ENCODE measurements at regions of chr2 and their contacts with region 1.

Region 1: DNA sequence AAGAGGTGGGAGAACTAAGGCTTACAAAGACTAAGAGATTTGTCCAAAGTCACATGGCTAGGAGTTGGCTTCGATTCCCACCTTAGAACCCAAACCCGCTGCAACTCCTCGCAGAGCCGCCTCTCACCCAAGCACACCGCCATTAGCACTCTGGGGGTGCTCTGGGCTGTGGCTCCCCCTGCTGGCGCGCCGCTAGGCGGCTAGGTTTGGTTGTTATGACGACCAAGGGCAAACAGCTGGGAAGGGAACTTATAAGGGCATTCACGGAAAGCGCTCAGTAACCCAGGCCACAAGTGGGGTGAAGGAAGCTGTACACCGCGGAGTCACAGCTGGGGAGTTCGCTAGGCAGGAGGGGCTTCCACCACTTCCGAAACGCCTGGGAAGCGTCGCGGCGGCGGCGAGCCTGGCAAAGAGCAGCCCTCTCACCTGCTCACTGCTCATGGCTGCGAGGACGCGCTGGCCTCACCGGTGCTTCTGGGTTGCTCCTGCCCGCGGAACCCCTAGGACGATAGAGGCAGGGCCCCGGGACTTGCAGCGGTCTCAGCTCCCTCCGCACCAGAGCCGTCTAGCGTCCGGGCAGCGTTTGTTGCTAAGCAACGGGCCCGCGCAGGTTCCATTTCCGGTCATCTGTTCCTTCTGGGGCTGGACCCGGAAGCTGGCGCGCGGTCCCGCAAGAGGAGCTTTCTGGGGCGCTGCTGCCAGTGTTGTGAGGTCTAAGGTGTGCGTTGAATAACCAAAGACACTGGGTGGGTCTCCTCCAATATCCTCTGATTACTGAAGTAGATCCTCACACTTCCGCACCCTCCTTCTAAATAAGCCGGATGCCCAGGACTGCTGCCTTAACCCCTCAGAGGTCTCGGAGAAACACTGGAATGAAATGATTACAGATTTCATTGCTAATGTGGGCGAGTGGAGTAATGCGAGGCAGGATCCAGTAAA is at the start of gene DNAH7:
- DNase-seq: peak; percentile 92 to 96 (median 92)
- H3K4me3 ChIP-seq: peak within 1 kb of the TSS; percentile 54 to 68
- H3K4me3 Mint-ChIP-seq: peak within 1 kb of the TSS; percentile 84 to 91 (median 86)
- H3K27ac ChIP-seq: peak within 1 kb of the TSS; percentile 27
- H3K27ac Mint-ChIP-seq: peak within 1 kb of the TSS; percentile 81 to 95 (median 86)
- H3K4me1 ChIP-seq: peaks cover 18% of the 10 kb centered on the region
- H3K4me1 Mint-ChIP-seq: peaks cover 5 to 15% (median 8%) of the 10 kb centered on the region in 4 donors
- H3K27me3 ChIP-seq: no peaks in the 10 kb centered on the region
- H3K27me3 Mint-ChIP-seq: peaks cover 1 to 7% of the 10 kb centered on the region in 2 donors
- total RNA-seq, gene DNAH7: not detected

Region 2: GRCh38 chr2:195318440-195319111 is 750.0 kb before region 1 on chr2:
- CTCF ChIA-PET with region 1: no interaction called
- POLR2A ChIA-PET with region 1: no interaction called
- intact Hi-C with region 1: loop called (anchors 5 kb)
- DNase-seq: peak; percentile 33 to 48 (median 44)
- H3K4me3 ChIP-seq: no peak overlapping the region
- H3K4me3 Mint-ChIP-seq: no peak overlapping the region
- H3K27ac ChIP-seq: no peak overlapping the region
- H3K27ac Mint-ChIP-seq: no peak overlapping the region
- H3K4me1 ChIP-seq: peaks cover 11% of the 10 kb centered on the region
- H3K4me1 Mint-ChIP-seq: peaks cover 5 to 11% (median 8%) of the 10 kb centered on the region in 4 donors
- H3K27me3 ChIP-seq: no peaks in the 10 kb centered on the region
- H3K27me3 Mint-ChIP-seq: no peaks in the 10 kb centered on the region

Region 3: GRCh38 chr2:195575879-195576401 is 492.6 kb before region 1 on chr2:
- CTCF ChIA-PET with region 1: interaction called, 5 read pairs
- POLR2A ChIA-PET with region 1: no interaction called
- intact Hi-C with region 1: loop called (anchors 2 kb)
- DNase-seq: no peak
- H3K4me3 ChIP-seq: no peak overlapping the region
- H3K4me3 Mint-ChIP-seq: peak overlapping the region in 7 of 8 donors; percentile 25 to 70 (median 57)
- H3K27ac ChIP-seq: no peak overlapping the region
- H3K27ac Mint-ChIP-seq: peak overlapping the region in 6 of 7 donors; percentile 36 to 93 (median 90)
- H3K4me1 ChIP-seq: peaks cover 47% of the 10 kb centered on the region
- H3K4me1 Mint-ChIP-seq: peaks cover 35 to 64% (median 52%) of the 10 kb centered on the region in 4 donors
- H3K27me3 ChIP-seq: no peaks in the 10 kb centered on the region
- H3K27me3 Mint-ChIP-seq: no peaks in the 10 kb centered on the region

Region 4: GRCh38 chr2:195838002-195838401 is 230.5 kb before region 1 on chr2:
- CTCF ChIA-PET with region 1: no interaction called
- POLR2A ChIA-PET with region 1: no interaction called
- intact Hi-C with region 1: no loop called
- DNase-seq: no peak
- H3K4me3 ChIP-seq: no peak overlapping the region
- H3K4me3 Mint-ChIP-seq: no peak overlapping the region
- H3K27ac ChIP-seq: no peak overlapping the region
- H3K27ac Mint-ChIP-seq: no peak overlapping the region
- H3K4me1 ChIP-seq: peaks cover 9% of the 10 kb centered on the region
- H3K4me1 Mint-ChIP-seq: peaks cover 5 to 15% (median 9%) of the 10 kb centered on the region in 4 donors
- H3K27me3 ChIP-seq: no peaks in the 10 kb centered on the region
- H3K27me3 Mint-ChIP-seq: peaks cover 1 to 2% of the 10 kb centered on the region in 2 donors

Region 5: DNA sequence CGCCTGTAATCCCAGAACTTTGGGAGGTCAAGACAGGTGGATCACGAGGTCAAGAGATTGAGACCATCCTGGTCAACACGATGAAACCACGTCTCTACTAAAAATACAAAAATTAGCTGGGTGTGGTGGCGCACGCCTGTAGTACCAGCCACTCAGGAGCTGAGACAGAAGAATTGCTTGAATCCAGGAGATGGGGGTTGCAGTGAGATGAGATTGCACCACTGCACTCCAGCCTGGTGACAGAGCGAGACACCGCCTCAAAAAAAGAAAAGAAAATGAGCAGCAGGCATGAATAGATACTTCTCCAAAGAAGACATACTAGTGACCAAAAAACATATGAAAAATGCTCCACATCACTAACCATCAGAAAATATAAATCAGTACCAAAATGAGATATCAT is 138.5 kb before region 1 on chr2:
- CTCF ChIA-PET with region 1: no interaction called
- POLR2A ChIA-PET with region 1: no interaction called
- intact Hi-C with region 1: no loop called
- DNase-seq: no peak
- H3K4me3 ChIP-seq: no peak overlapping the region
- H3K4me3 Mint-ChIP-seq: no peak overlapping the region
- H3K27ac ChIP-seq: no peak overlapping the region
- H3K27ac Mint-ChIP-seq: no peak overlapping the region
- H3K4me1 ChIP-seq: no peaks in the 10 kb centered on the region
- H3K4me1 Mint-ChIP-seq: no peaks in the 10 kb centered on the region
- H3K27me3 ChIP-seq: no peaks in the 10 kb centered on the region
- H3K27me3 Mint-ChIP-seq: peaks cover 0 to 3% of the 10 kb centered on the region in 2 donors

Region 6: GRCh38 chr2:195961873-195962272 is 106.7 kb before region 1 on chr2:
- CTCF ChIA-PET with region 1: no interaction called
- POLR2A ChIA-PET with region 1: no interaction called
- intact Hi-C with region 1: no loop called
- DNase-seq: no peak
- H3K4me3 ChIP-seq: no peak overlapping the region
- H3K4me3 Mint-ChIP-seq: no peak overlapping the region
- H3K27ac ChIP-seq: no peak overlapping the region
- H3K27ac Mint-ChIP-seq: no peak overlapping the region
- H3K4me1 ChIP-seq: no peaks in the 10 kb centered on the region
- H3K4me1 Mint-ChIP-seq: no peaks in the 10 kb centered on the region
- H3K27me3 ChIP-seq: no peaks in the 10 kb centered on the region
- H3K27me3 Mint-ChIP-seq: peaks cover 7 to 10% of the 10 kb centered on the region in 2 donors

Region 7: GRCh38 chr2:195995499-195995898 is 73.0 kb before region 1 on chr2:
- CTCF ChIA-PET with region 1: no interaction called
- POLR2A ChIA-PET with region 1: no interaction called
- intact Hi-C with region 1: no loop called
- DNase-seq: no peak
- H3K4me3 ChIP-seq: no peak overlapping the region
- H3K4me3 Mint-ChIP-seq: no peak overlapping the region
- H3K27ac ChIP-seq: no peak overlapping the region
- H3K27ac Mint-ChIP-seq: no peak overlapping the region
- H3K4me1 ChIP-seq: no peaks in the 10 kb centered on the region
- H3K4me1 Mint-ChIP-seq: peaks cover 0 to 1% (median 0%) of the 10 kb centered on the region in 4 donors
- H3K27me3 ChIP-seq: no peaks in the 10 kb centered on the region
- H3K27me3 Mint-ChIP-seq: peaks cover 0 to 6% of the 10 kb centered on the region in 2 donors

Region 8: GRCh38 chr2:196225213-196225612 is 156.7 kb after region 1 on chr2:
- CTCF ChIA-PET with region 1: interaction called, 129 read pairs
- POLR2A ChIA-PET with region 1: no interaction called
- intact Hi-C with region 1: no loop called
- DNase-seq: no peak
- H3K4me3 ChIP-seq: no peak overlapping the region
- H3K4me3 Mint-ChIP-seq: peak overlapping the region in 3 of 8 donors; percentile 33 to 57 (median 41)
- H3K27ac ChIP-seq: no peak overlapping the region
- H3K27ac Mint-ChIP-seq: peak overlapping the region in 5 of 7 donors; percentile 1 to 68 (median 54)
- H3K4me1 ChIP-seq: peaks cover 79% of the 10 kb centered on the region
- H3K4me1 Mint-ChIP-seq: peaks cover 51 to 85% (median 69%) of the 10 kb centered on the region in 4 donors
- H3K27me3 ChIP-seq: no peaks in the 10 kb centered on the region
- H3K27me3 Mint-ChIP-seq: no peaks in the 10 kb centered on the region

Region 9: DNA sequence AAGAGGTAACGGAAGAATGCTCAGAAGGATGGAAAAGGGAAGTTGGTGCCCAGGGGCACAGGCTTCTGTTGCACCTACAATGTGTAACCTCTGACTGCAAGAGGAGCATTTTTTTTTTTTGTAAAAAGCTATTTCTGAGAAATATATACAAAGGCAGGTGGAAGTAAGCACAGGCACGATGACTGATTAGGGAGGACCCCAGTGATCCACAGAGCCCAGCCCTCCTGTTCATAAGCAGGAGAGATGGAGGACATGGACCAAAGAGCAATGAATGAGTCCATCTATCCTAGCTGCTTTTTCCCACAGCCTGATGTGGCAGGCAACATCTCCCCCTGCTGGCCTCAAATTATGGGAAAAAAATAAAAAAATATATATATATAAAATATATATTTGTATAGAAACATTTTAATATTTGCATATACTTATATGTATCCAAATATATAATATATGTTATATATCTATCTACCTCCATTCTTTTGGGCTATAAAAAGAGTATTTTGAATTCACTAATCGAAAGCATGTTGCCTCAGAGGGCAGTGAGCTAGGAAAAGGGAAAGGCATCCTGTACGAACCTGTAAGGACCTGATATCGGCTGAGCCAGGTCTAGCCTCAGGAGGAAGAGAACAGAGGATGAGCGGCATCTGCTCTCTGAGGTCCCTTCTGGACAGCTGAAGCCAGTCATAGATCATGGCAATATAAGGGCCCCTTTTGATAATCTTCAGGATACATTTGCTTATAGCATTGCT is 268.8 kb after region 1 on chr2:
- CTCF ChIA-PET with region 1: interaction called, 33 read pairs
- POLR2A ChIA-PET with region 1: no interaction called
- intact Hi-C with region 1: no loop called
- DNase-seq: peak in 4 of 5 donors; percentile 23 to 32 (median 24)
- H3K4me3 ChIP-seq: no peak overlapping the region
- H3K4me3 Mint-ChIP-seq: no peak overlapping the region
- H3K27ac ChIP-seq: no peak overlapping the region
- H3K27ac Mint-ChIP-seq: no peak overlapping the region
- H3K4me1 ChIP-seq: peaks cover 4% of the 10 kb centered on the region
- H3K4me1 Mint-ChIP-seq: peaks cover 0 to 7% (median 1%) of the 10 kb centered on the region in 4 donors
- H3K27me3 ChIP-seq: no peaks in the 10 kb centered on the region
- H3K27me3 Mint-ChIP-seq: peaks cover 0 to 1% of the 10 kb centered on the region in 2 donors

Region 10: GRCh38 chr2:196639180-196640030 is 570.9 kb after region 1 on chr2 and contains the start of gene CCDC150:
- CTCF ChIA-PET with region 1: interaction called, 5 read pairs
- POLR2A ChIA-PET with region 1: no interaction called
- intact Hi-C with region 1: loop called (anchors 10 kb)
- DNase-seq: peak; percentile 92 to 94 (median 94)
- H3K4me3 ChIP-seq: peak within 1 kb of the TSS; percentile 69 to 79
- H3K4me3 Mint-ChIP-seq: peak within 1 kb of the TSS; percentile 83 to 93 (median 90)
- H3K27ac ChIP-seq: peak within 1 kb of the TSS; percentile 39
- H3K27ac Mint-ChIP-seq: peak within 1 kb of the TSS; percentile 39 to 87 (median 72)
- H3K4me1 ChIP-seq: peaks cover 9% of the 10 kb centered on the region
- H3K4me1 Mint-ChIP-seq: peaks cover 8 to 20% (median 13%) of the 10 kb centered on the region in 4 donors
- H3K27me3 ChIP-seq: no peaks in the 10 kb centered on the region
- H3K27me3 Mint-ChIP-seq: peaks cover 0 to 4% of the 10 kb centered on the region in 2 donors
- total RNA-seq, gene CCDC150: 0.44 to 0.87 TPM

Measured in CD4-positive, alpha-beta memory T cell (primary cell).